HCT116 (cell line): ENCODE measurements at regions of chr7 and their contacts with region 1.

Region 1: DNA sequence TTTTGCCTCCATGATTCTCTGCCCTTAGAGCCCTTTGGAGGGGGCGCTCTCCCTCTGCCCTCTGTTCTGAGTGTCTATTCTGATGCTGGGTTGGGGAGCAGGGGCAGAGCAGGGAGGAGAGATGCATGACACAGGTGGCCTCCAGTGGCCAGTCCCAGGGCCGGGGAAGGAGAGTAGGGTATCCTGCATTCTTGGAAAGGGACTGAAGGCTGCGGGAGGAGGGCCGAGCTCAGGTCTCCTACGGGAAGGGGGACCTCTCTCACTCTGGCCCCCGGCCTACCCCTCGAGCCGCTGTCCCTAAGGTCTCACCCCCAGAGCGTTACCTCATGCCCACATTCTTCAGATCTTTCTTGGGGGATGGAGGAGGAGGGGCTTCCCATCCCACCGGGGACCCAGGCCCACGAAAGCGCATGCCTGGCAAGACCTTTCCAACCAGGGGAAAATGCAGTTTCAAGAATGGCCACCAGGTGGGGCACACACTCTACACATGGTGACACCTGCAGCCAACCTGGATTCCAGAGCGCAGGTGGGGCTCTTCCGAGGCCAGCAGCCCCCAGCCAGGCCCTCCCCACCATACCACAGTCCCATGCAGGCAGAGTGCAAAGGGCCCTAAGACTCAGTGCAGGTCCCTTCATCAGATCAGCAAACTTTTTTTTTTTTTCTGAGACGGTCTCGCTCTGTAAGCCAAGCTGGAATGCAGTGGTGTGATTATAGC is 86.4 kb downstream of the MYL10 start:
- DNase-seq: peak; percentile 33
- ATAC-seq: peak; percentile 71
- H3K4me3 ChIP-seq: no peak overlapping the region
- H3K27ac ChIP-seq: no peak overlapping the region
- H3K4me1 ChIP-seq: peaks cover 0 to 18% of the 10 kb centered on the region in 2 experiments; a peak in 2 of 4 replicates
- H3K27me3 ChIP-seq: no peaks in the 10 kb centered on the region
- CTCF ChIP-seq: peak; percentile 79 to 89 (median 88); a peak in 5 of 6 replicates
- POLR2A ChIP-seq: no peak
- RAD21 ChIP-seq: peak; percentile 99

Region 2: DNA sequence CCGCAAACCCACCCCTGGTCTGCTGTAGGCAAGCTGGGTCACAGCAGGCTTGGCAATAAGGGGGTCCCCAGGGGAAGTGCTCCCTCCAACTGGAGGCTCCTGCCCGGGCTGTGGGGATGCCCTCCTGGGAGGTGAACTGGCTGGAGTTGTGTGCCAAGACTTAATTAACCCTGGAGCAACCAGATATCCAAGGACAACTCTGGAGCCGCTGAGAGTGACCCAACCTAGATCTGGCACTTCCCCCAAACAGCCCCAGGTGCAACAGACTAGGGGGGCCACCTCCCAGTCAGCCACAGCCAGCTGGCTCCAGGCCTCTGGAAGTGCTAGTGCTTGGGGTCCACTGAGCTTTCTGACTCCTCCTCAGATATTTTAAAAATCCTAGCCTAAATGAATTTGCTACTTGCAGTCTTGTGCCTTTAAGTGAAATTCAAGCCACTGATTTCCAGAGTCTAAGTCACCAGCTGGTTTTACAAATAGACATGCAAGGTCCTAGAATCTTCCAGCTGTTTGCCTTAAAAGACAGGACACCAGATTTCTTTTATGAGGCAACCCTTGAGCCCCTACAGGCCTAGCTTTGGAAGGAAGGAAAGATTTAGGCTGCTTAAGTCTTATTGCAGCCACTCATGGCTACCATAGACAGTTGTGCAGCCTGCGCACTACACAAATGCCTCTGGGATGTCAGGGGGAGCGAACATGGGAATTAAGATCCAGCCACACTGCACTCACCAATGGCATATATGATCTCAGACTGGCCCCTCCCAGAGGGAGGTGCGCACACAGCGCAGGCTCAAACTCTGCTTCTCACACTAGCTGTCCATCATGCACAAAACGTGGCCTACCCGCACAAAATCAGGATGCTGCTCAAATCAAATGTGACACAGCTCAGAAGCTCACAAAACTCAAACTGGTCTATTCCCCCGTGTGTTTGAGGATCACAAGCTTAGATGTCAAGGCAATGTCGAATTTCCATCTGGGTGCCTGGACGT is 129.0 kb after region 1 on chr7:
- CTCF ChIA-PET with region 1: no interaction called
- POLR2A ChIA-PET with region 1: no interaction called
- RAD21 ChIA-PET with region 1: no interaction called
- intact Hi-C with region 1: no loop called
- DNase-seq: no peak
- ATAC-seq: no peak
- H3K4me3 ChIP-seq: no peak overlapping the region
- H3K27ac ChIP-seq: no peak overlapping the region
- H3K4me1 ChIP-seq: no peaks in the 10 kb centered on the region
- H3K27me3 ChIP-seq: no peaks in the 10 kb centered on the region
- CTCF ChIP-seq: no peak
- POLR2A ChIP-seq: no peak
- RAD21 ChIP-seq: no peak

Region 3: GRCh38 chr7:101688183-101688831 is 145.6 kb after region 1 on chr7:
- CTCF ChIA-PET with region 1: no interaction called
- POLR2A ChIA-PET with region 1: no interaction called
- RAD21 ChIA-PET with region 1: no interaction called
- intact Hi-C with region 1: loop called (anchors 5 kb)
- DNase-seq: peak; percentile 34
- ATAC-seq: peak; percentile 94
- H3K4me3 ChIP-seq: peak overlapping the region; percentile 27 to 42
- H3K27ac ChIP-seq: no peak overlapping the region; the same call in 1 of the 2 replicates
- H3K4me1 ChIP-seq: peaks cover 5 to 13% of the 10 kb centered on the region in 2 experiments; a peak in 3 of 4 replicates
- H3K27me3 ChIP-seq: no peaks in the 10 kb centered on the region
- CTCF ChIP-seq: peak; percentile 82 to 89 (median 84)
- POLR2A ChIP-seq: no peak
- RAD21 ChIP-seq: peak; percentile 98

Region 4: GRCh38 chr7:102390697-102391484 is 848.2 kb after region 1 on chr7:
- CTCF ChIA-PET with region 1: no interaction called
- POLR2A ChIA-PET with region 1: no interaction called
- RAD21 ChIA-PET with region 1: no interaction called
- intact Hi-C with region 1: loop called (anchors 1 kb)
- DNase-seq: peak; percentile 60
- ATAC-seq: peak; percentile 91
- H3K4me3 ChIP-seq: no peak overlapping the region
- H3K27ac ChIP-seq: no peak overlapping the region
- H3K4me1 ChIP-seq: peaks cover 19 to 21% of the 10 kb centered on the region in 2 experiments
- H3K27me3 ChIP-seq: no peaks in the 10 kb centered on the region
- CTCF ChIP-seq: peak; percentile 84 to 95 (median 92)
- POLR2A ChIP-seq: no peak
- RAD21 ChIP-seq: peak; percentile 93